Prostate gland (tissue), 2 donors: ENCODE measurements at regions of chr19 and their contacts with region 1.

Region 1: GRCh38 chr19:10380313-10381102 is at the start of gene TYK2:
- DNase-seq: peak; percentile 97
- H3K4me3 ChIP-seq: peak within 1 kb of the TSS; percentile 84
- H3K27ac ChIP-seq: peak within 1 kb of the TSS; percentile 76 to 79
- H3K4me1 ChIP-seq: no peaks in the 10 kb centered on the region
- H3K27me3 ChIP-seq: no peaks in the 10 kb centered on the region
- CTCF ChIP-seq: peak in 1 of 4 experiments; percentile 13
- POLR2A ChIP-seq: peak; percentile 44
- total RNA-seq, gene TYK2: 90.8 to 161 TPM

Region 2: GRCh38 chr19:10332955-10333757 is 47.4 kb before region 1 on chr19 and contains the start of gene RAVER1:
- intact Hi-C with region 1: loop called (anchors 2 kb)
- DNase-seq: peak; percentile 97
- H3K4me3 ChIP-seq: peak within 1 kb of the TSS; percentile 73 to 81
- H3K27ac ChIP-seq: peak within 1 kb of the TSS; percentile 87 to 92
- H3K4me1 ChIP-seq: peaks cover 13% of the 10 kb centered on the region
- H3K27me3 ChIP-seq: no peaks in the 10 kb centered on the region
- CTCF ChIP-seq: no peak
- POLR2A ChIP-seq: peak; percentile 50
- total RNA-seq, gene RAVER1: 50.2 to 53.2 TPM